Endothelial cell of umbilical vein (primary cell): ENCODE measurements at regions of chr12 and their contacts with region 1.

Region 1: GRCh38 chr12:110124184-110124995 is at the start of gene IFT81:
- DNase-seq: peak; percentile 89
- H3K4me3 ChIP-seq: peak within 1 kb of the TSS; percentile 22 to 89 (median 57)
- H3K27ac ChIP-seq: peak within 1 kb of the TSS; percentile 66
- H3K4me1 ChIP-seq: no peaks in the 10 kb centered on the region
- H3K27me3 ChIP-seq: peaks cover 3 to 4% of the 10 kb centered on the region in 2 experiments
- CTCF ChIP-seq: no peak
- POLR2A ChIP-seq: peak; percentile 48
- total RNA-seq, gene IFT81: 9.4 and 9.8 TPM in 2 replicates

Region 2: DNA sequence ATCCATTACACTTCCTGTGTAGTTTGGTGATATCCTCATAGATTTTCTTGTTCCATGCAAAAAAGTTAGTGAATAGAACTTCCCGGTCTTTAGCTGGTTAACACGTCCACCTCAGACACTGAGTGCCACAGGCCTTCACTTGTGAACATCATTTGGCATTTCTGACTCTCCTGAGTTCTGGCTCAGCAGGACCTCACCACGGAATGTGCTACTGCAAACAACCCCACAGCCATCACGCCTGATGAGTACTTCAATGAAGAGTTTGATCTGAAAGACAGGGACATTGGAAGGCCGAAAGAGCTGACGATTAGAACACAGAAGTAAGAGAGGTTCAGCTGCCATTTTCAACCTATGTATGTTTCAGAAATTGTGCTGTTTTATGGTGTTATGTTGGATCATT is 96.1 kb before region 1 on chr12:
- CTCF ChIA-PET with region 1: no interaction called
- POLR2A ChIA-PET with region 1: no interaction called
- dilution Hi-C with region 1: no loop called
- intact Hi-C with region 1: no loop called
- DNase-seq: no peak
- H3K4me3 ChIP-seq: no peak overlapping the region
- H3K27ac ChIP-seq: no peak overlapping the region
- H3K4me1 ChIP-seq: peaks cover 28% of the 10 kb centered on the region
- H3K27me3 ChIP-seq: no peaks in the 10 kb centered on the region
- CTCF ChIP-seq: no peak
- POLR2A ChIP-seq: no peak

Region 3: DNA sequence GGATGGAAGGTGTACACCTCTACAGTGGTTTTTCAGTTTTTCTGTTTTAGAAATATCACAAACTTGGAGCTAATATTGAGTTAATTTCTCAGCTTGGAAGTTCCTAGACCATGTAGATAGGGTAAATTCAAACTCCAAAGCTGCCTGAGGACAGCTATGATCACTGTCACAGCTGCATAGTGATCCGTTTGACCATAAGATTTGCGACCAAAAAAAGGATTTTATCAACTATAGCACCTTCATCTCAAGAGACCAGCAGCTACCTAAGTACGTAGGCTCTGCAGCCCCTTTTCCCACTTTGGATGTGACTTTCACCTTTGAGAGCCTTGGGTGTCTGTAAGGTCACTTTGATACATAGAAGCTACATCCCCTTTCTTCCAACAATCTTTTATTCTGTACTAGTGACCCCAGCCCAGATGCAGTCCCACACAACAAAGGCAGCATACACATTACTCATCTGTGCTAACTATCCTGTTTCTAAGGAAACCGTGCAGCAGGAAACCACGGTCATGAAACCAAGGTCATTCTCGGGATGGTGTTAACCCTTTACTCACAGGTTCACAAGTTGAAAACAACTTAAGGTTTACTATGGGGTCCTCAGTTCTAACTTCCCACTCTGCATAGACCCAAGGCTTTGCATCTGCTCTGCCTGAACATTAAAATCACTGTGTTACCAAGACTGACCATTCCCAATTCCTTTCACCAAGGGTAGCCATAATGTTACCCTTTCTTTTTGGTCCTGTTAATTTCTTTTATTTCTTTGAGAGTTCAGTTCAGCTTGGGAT is 75.1 kb after region 1 on chr12:
- CTCF ChIA-PET with region 1: interaction called, 3 read pairs
- POLR2A ChIA-PET with region 1: no interaction called
- dilution Hi-C with region 1: no loop called
- intact Hi-C with region 1: loop called (anchors 5 kb)
- DNase-seq: peak; percentile 94
- H3K4me3 ChIP-seq: peak overlapping the region in 1 of 3 experiments; percentile 46
- H3K27ac ChIP-seq: peak overlapping the region; percentile 89
- H3K4me1 ChIP-seq: peaks cover 27% of the 10 kb centered on the region
- H3K27me3 ChIP-seq: no peaks in the 10 kb centered on the region
- CTCF ChIP-seq: no peak
- POLR2A ChIP-seq: no peak

Region 4: GRCh38 chr12:110224379-110225304 is 100.3 kb after region 1 on chr12:
- CTCF ChIA-PET with region 1: interaction called, 7 read pairs
- POLR2A ChIA-PET with region 1: interaction called, 3 read pairs
- dilution Hi-C with region 1: no loop called
- intact Hi-C with region 1: loop called (anchors 1 kb)
- DNase-seq: peak; percentile 85
- H3K4me3 ChIP-seq: peak overlapping the region in 1 of 3 experiments; percentile 46
- H3K27ac ChIP-seq: no peak overlapping the region
- H3K4me1 ChIP-seq: peaks cover 6% of the 10 kb centered on the region
- H3K27me3 ChIP-seq: no peaks in the 10 kb centered on the region
- CTCF ChIP-seq: peak; percentile 43 to 53
- POLR2A ChIP-seq: no peak